IMR-90 (cell line): ENCODE measurements at regions of chr1 and their contacts with region 1.

Region 1: GRCh38 chr1:86704458-86704971 is at the start of gene SH3GLB1:
- DNase-seq: peak; percentile 82
- ATAC-seq: peak; percentile 93
- H3K4me3 ChIP-seq: peak within 1 kb of the TSS; percentile 64
- H3K27ac ChIP-seq: peak within 1 kb of the TSS; percentile 90
- H3K4me1 ChIP-seq: no peaks in the 10 kb centered on the region; the same call in 1 of the 2 replicates
- H3K27me3 ChIP-seq: no peaks in the 10 kb centered on the region
- CTCF ChIP-seq: peak; percentile 85
- POLR2A ChIP-seq: peak; percentile 68
- RAD21 ChIP-seq: 0 out of 2 replicates have a peak, but pooled peaks have one; percentile 22
- total RNA-seq, gene SH3GLB1: 22.2 and 30.3 TPM in 2 replicates

Region 2: DNA sequence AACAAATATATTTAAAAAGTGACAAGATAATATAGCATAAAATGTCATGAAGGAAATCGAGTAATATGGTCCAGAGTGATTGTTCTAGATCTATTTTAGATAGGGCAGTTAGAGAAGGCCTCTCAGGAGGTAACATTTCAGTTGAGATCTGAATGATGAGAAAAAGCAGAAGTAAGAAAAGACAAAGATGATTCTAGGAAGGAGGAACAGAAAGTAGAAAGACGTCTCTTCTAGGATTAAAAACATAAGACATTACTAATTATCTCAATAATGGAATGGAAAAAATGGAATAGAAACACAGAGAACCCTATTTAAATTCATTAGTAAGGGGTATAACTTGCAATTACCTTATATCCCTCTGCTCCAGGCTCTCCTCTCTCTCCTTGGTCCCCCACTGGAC is 866.3 kb before region 1 on chr1:
- CTCF ChIA-PET with region 1: no interaction called
- POLR2A ChIA-PET with region 1: interaction called, 15 read pairs
- dilution Hi-C with region 1: no loop called
- in situ Hi-C with region 1: no loop called
- intact Hi-C with region 1: no loop called
- DNase-seq: no peak
- ATAC-seq: no peak
- H3K4me3 ChIP-seq: no peak overlapping the region
- H3K27ac ChIP-seq: no peak overlapping the region
- H3K4me1 ChIP-seq: no peaks in the 10 kb centered on the region
- H3K27me3 ChIP-seq: no peaks in the 10 kb centered on the region
- CTCF ChIP-seq: no peak
- POLR2A ChIP-seq: no peak
- RAD21 ChIP-seq: no peak

Region 3: DNA sequence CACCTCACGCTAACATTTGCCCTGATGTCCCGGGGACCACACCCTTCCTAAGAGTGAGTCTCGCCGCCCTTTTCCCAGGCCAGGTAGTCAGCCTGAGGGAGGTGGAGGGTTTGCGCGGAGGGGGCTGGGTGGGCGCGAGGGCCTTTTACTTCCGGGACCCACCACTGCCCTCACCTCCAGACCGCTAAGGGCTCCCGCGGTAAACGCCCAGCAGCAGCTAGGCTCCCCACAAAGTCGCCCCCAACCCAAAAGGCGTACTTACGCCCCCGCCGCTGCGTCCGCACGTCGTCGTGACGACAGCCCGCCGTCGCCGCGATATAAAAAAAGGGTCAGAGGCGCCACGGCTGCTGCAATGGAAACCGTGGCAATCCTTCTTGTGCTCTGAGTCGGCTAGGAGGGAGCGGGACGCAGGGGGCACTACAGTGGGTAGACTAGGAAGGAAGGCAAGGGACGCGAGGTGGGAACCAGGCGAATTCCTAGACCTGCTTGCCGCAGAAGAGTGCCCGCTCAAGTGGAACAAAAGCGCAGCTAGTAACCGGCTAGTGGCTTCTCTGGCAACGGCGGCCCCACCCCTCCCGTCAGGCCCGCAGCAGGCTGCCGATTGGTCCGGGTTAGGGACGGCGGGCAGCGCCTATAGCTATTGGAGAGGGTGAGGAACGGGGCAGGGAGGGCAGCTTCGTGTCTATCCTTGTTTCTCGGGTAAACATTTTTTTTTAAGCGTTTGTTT is 308.6 kb before region 1 on chr1 and contains the start of gene ODF2L:
- CTCF ChIA-PET with region 1: no interaction called
- POLR2A ChIA-PET with region 1: no interaction called
- dilution Hi-C with region 1: no loop called
- in situ Hi-C with region 1: no loop called
- intact Hi-C with region 1: loop called (anchors 5 kb)
- DNase-seq: peak; percentile 74
- ATAC-seq: peak; percentile 100
- H3K4me3 ChIP-seq: peak within 1 kb of the TSS; percentile 84
- H3K27ac ChIP-seq: peak within 1 kb of the TSS; percentile 88
- H3K4me1 ChIP-seq: peaks cover 2% of the 10 kb centered on the region; the same call in 1 of the 2 replicates
- H3K27me3 ChIP-seq: peaks cover 4% of the 10 kb centered on the region; the same call in 1 of the 2 replicates
- CTCF ChIP-seq: no peak
- POLR2A ChIP-seq: peak; percentile 78
- RAD21 ChIP-seq: no peak
- total RNA-seq, gene ODF2L: 10.4 and 20.0 TPM in 2 replicates